ENCODE measurements at regions of chr22 and their contacts with region 1.

Region 1: GRCh38 chr22:30606455-30607299 is at the start of gene TCN2:
- DNase-seq: peak; percentile 62
- ATAC-seq: peak; percentile 57
- H3K4me3 Mint-ChIP-seq: peak within 1 kb of the TSS; percentile 60
- H3K27ac Mint-ChIP-seq: peak within 1 kb of the TSS; percentile 75
- H3K4me1 Mint-ChIP-seq: peaks cover 48% of the 10 kb centered on the region
- H3K27me3 Mint-ChIP-seq: no peaks in the 10 kb centered on the region
- total RNA-seq, gene TCN2: 0.24 to 0.34 TPM

Region 2: DNA sequence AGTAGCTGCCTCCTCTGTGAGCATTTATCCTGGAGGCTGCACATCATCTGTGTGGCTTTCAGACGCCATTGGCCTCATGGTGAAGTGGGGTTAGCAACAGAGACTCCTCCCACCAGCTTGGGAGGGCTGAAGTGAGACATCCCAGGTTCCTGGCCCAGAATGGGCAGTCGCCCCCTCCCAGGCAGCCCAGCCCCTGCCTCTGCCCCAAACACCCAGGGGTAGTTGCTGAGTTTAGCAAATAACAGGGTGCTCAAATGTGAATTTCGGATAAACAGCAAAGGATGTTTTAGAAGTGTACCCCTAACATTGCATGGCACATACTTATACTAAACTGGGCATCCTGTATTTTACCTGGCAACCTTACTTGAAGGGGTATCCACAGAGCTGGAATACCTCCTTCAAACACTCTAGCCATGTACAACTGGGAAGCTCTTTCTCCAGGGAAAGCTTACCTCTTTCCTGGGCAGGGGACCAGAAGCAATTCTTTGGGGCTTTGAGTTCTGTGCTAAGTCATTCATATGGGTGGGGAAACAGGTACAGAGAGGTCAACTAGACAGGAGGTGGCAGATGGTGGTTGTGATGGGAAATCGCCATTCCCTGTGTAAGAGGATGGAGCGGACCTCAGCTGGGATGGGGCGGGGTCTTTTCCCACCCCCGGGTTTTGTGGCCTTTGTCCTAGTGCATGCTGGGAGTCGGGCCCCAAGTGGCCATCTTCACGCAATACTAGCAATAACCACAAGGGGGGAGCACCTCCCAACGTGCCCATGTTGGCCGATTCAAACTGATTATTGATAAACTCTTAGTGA is 161.8 kb before region 1 on chr22:
- CTCF ChIA-PET with region 1: interaction called, 10 read pairs
- POLR2A ChIA-PET with region 1: no interaction called
- DNase-seq: peak; percentile 70
- ATAC-seq: peak; percentile 43
- H3K4me3 Mint-ChIP-seq: no peak overlapping the region
- H3K27ac Mint-ChIP-seq: no peak overlapping the region
- H3K4me1 Mint-ChIP-seq: peaks cover 32% of the 10 kb centered on the region
- H3K27me3 Mint-ChIP-seq: peaks cover 18% of the 10 kb centered on the region

Region 3: DNA sequence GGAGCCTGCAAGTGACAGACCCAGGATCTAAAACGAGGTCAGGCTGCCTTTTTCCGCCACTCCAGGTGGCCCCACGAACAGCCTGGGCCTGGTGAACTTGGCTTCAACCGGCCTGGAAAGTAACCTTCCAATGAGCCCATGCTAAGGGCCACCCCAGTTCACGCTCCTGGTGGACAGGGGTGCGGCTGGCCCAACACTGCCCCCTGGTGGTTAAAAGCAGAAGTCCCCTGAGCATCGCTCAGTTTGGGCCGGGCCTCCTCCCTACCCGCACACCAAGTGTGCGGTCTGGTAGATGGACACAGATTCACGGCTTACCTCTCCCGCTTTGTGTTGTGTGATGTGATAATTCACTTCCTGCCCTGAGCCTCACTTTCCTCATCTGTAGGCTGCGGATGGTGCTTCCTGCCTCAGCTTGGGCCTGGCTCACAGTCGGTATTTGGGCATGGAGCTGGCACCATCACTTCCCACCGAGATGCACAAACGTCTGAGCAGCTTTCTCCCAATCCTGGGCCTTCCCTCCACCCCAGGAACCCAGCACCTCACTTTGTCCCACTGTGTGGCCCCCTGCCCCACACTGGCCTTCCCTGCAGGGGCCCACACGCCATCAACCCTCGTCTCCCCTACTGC is 121.2 kb before region 1 on chr22:
- CTCF ChIA-PET with region 1: no interaction called
- POLR2A ChIA-PET with region 1: no interaction called
- DNase-seq: peak; percentile 83
- ATAC-seq: peak; percentile 99
- H3K4me3 Mint-ChIP-seq: no peak overlapping the region
- H3K27ac Mint-ChIP-seq: no peak overlapping the region
- H3K4me1 Mint-ChIP-seq: peaks cover 7% of the 10 kb centered on the region
- H3K27me3 Mint-ChIP-seq: no peaks in the 10 kb centered on the region

Region 4: DNA sequence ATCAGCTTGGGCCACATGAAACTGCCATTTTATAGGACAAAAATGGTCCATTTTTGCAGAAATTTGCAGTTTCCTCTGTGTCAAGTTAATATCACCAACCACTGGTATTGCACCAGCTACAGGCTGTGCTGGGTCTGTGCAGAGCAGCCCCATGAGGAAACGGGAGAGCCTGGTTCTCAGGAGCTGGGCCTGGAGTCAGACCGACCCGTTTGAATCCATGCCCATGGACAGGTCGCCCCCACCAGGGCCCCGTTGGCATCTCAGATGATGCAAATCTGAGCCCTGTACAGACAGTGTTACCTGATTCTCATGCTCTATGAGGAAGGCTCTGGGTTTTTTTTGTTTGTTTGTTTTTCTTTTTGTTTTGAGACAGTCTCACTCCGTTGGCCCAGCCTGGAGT is 50.3 kb before region 1 on chr22:
- CTCF ChIA-PET with region 1: no interaction called
- POLR2A ChIA-PET with region 1: no interaction called
- DNase-seq: no peak
- ATAC-seq: no peak
- H3K4me3 Mint-ChIP-seq: no peak overlapping the region
- H3K27ac Mint-ChIP-seq: no peak overlapping the region
- H3K4me1 Mint-ChIP-seq: no peaks in the 10 kb centered on the region
- H3K27me3 Mint-ChIP-seq: no peaks in the 10 kb centered on the region

Region 5: DNA sequence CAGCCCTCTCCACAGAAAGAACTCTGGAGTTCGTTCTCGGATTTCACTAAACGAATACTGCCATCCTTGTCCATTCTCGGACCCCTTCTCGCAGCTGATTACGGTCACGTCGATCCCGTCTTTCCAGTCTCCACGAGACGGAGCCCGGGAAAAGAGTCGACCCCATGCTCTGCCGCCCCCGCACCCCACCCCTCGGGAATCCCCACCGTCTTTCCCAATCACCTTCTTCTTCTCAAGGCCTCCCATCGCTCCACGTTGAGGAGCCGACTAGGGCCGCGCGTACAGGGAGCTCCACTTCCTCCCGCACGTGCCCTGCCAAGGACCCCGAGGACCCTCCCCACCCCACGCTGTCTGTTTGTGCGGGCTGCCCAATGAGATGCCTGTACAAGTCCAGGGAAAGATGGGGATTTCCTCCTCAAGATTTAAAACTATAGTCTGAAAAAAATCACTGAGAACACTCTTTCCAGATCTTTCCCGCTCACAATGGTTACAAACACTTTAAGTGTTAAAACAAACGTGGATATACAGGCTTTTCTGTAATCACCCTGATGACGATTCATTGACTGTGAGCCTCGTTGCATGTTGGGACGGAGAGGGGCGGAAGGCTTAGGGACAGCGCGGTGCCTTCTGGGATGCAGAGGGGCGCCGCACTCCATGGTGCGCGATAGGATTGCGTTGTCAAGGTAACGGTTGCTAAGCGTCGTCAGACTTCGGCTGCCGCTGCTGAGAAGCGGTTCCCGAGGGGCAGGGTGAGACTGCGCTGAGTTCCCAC is 14.9 kb before region 1 on chr22 and contains the start of gene PES1:
- CTCF ChIA-PET with region 1: interaction called, 24 read pairs
- POLR2A ChIA-PET with region 1: interaction called, 5 read pairs
- DNase-seq: peak; percentile 97
- ATAC-seq: peak; percentile 97
- H3K4me3 Mint-ChIP-seq: no peak within 1 kb of the TSS
- H3K27ac Mint-ChIP-seq: no peak within 1 kb of the TSS
- H3K4me1 Mint-ChIP-seq: no peaks in the 10 kb centered on the region
- H3K27me3 Mint-ChIP-seq: peaks cover 4% of the 10 kb centered on the region
- total RNA-seq, gene PES1: 65.8 to 68.8 TPM

Measured in activated CD8-positive, alpha-beta T cell treated with anti-CD3 and anti-CD28 coated beads, Interleukin-2, amount 10 ng/mL, durations not matched to agents 7 days and 5 days (primary cell).